ENCODE measurements at regions of chr3 and their contacts with region 1.

Region 1: DNA sequence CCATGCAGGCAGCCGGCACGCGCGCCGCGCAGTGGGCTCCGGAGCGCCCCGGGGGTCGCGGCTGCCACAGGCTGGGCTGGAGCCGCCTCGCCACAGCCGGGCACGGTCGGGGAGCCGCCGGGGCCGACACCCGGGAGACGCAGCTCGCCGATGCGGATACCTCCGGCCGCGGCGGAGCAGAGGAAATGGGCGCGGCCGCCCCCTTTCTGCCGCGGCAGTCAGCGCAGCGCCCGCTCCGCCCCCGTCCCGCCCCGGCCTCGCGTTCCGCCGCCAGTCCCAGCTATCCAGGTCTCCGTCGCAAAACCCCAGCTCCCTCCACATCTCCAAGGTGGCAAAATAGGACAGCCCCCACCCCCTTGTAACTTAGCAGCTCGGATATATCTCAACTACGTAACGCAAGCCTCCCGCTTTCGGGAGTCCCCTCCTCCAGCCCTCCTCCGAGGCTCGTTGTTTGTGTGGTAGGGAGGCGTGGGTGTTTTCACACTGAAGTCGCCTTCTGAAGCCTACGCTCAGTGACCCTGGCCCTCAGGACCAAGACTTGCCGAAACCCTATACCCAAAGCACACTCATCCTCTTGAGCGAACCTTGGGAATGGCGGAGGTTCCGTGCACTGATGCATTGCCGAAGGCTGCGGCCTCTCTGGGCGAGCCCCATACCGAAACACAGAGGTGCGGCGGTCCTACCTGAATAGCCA is at the start of gene SH3BP5:
- DNase-seq: peak; percentile 68 to 81
- ATAC-seq: peak; percentile 95 to 97
- H3K4me3 ChIP-seq: peak within 1 kb of the TSS; percentile 75
- H3K27ac ChIP-seq: peak within 1 kb of the TSS; percentile 68 to 87
- H3K4me1 ChIP-seq: peaks cover 11% of the 10 kb centered on the region; the same call in 2 of the 3 replicates
- CTCF ChIP-seq: peak; percentile 44
- EP300 ChIP-seq: no peak
- POLR2A ChIP-seq: peak; percentile 61
- RAD21 ChIP-seq: peak; percentile 19 to 60; a peak in 4 of 5 replicates
- polyA plus RNA-seq, gene SH3BP5: 12.6 and 16.0 TPM in 2 replicates

Region 2: DNA sequence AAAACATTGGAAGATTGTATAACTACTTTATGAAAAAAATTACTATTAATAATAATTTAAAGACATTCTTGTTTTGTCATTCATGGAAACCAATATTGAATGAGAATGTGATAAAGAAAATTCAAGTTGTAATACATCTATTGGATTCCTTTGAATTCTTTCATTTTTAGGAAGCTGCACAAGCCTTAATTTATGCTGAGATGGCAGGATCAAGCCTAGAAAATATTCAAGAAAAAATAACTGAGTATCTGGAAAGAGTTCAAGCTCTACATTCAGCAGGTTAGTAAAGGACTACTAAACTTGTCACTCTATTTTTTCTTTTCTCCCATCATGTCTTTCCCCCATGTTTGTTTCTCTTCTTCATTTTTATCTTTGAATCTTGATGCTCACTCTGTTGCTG is 120.6 kb before region 1 on chr3:
- CTCF ChIA-PET with region 1: no interaction called
- POLR2A ChIA-PET with region 1: no interaction called
- DNase-seq: no peak
- ATAC-seq: no peak
- H3K4me3 ChIP-seq: no peak overlapping the region
- H3K27ac ChIP-seq: no peak overlapping the region
- H3K4me1 ChIP-seq: peaks cover 11% of the 10 kb centered on the region
- CTCF ChIP-seq: no peak
- EP300 ChIP-seq: no peak
- POLR2A ChIP-seq: no peak
- RAD21 ChIP-seq: no peak

Region 3: DNA sequence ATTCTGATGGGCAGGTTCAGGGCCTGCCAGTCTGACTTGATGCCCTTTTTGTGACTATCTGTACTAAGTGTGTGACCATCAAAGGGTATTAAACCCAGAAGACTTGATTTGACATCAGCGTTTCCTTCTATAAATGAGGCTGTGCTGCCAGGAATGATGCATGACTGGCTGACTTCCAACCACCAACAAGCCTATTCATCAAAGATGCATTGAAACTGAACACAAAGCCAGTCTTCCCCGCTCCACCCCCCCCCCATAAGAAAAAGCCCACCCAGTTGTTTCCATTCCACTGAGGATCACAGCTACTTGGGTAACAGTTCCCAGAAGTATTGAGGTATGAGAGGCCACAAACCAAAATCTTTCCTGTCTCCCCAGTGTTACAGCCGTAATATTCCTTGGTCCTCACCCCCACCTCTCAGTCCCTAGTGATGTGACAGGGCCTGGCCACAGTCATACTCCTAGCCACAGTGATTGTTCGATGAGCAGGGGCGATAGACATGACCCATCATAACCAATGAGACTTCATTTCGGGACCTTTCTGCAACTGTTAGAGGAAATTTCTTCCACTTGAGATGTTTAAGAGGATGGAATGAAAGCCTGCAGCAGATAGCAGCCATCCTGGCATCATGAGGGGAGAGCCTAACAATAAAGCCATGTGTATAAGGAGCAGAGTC is 22.8 kb before region 1 on chr3:
- CTCF ChIA-PET with region 1: interaction called, 14 read pairs
- POLR2A ChIA-PET with region 1: no interaction called
- DNase-seq: no peak
- ATAC-seq: no peak
- H3K4me3 ChIP-seq: no peak overlapping the region
- H3K27ac ChIP-seq: peak overlapping the region; percentile 10 to 41; a peak in 3 of 6 replicates
- H3K4me1 ChIP-seq: peaks cover 30% of the 10 kb centered on the region
- CTCF ChIP-seq: no peak
- EP300 ChIP-seq: no peak
- POLR2A ChIP-seq: no peak
- RAD21 ChIP-seq: no peak

Region 4: DNA sequence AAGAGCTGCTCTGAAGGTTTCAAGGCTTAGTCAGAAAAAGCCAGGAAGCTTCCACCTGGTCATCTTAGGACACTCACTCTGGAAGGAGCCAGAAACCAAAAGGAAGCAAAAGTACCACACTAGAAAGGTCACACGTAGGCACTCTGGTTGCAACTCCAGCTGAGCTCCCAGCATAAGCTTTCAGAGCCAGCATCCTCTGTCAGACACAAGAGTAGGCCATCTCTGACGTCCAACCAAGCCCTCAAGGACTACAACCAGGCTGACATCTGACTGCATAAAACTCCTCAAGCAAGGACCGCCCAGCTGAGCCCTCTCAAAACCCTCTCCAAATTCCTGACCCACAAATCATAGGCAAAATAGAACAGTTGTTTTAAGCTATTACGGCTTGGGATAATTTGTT is 13.0 kb before region 1 on chr3:
- CTCF ChIA-PET with region 1: interaction called, 25 read pairs
- POLR2A ChIA-PET with region 1: no interaction called
- DNase-seq: no peak
- ATAC-seq: no peak; a peak in 1 of 6 replicates
- H3K4me3 ChIP-seq: no peak overlapping the region
- H3K27ac ChIP-seq: peak overlapping the region in 1 of 2 experiments; percentile 8; a peak in 1 of 6 replicates
- H3K4me1 ChIP-seq: peaks cover 22% of the 10 kb centered on the region
- CTCF ChIP-seq: no peak
- EP300 ChIP-seq: no peak
- POLR2A ChIP-seq: no peak
- RAD21 ChIP-seq: no peak

Region 5: GRCh38 chr3:15345608-15346137 is 13.1 kb after region 1 on chr3:
- CTCF ChIA-PET with region 1: interaction called, 13 read pairs
- POLR2A ChIA-PET with region 1: no interaction called
- DNase-seq: no peak
- ATAC-seq: no peak
- H3K4me3 ChIP-seq: no peak overlapping the region
- H3K27ac ChIP-seq: no peak overlapping the region
- H3K4me1 ChIP-seq: no peaks in the 10 kb centered on the region
- CTCF ChIP-seq: no peak
- EP300 ChIP-seq: no peak
- POLR2A ChIP-seq: no peak
- RAD21 ChIP-seq: no peak

Region 6: GRCh38 chr3:15420871-15421270 is 88.3 kb after region 1 on chr3:
- CTCF ChIA-PET with region 1: no interaction called
- POLR2A ChIA-PET with region 1: no interaction called
- DNase-seq: no peak
- ATAC-seq: no peak
- H3K4me3 ChIP-seq: no peak overlapping the region
- H3K27ac ChIP-seq: no peak overlapping the region
- H3K4me1 ChIP-seq: no peaks in the 10 kb centered on the region; the same call in 2 of the 3 replicates
- CTCF ChIP-seq: no peak
- EP300 ChIP-seq: no peak
- POLR2A ChIP-seq: no peak
- RAD21 ChIP-seq: no peak

Region 7: GRCh38 chr3:15500107-15500724 is 167.7 kb after region 1 on chr3:
- CTCF ChIA-PET with region 1: no interaction called
- POLR2A ChIA-PET with region 1: no interaction called
- DNase-seq: no peak
- ATAC-seq: no peak
- H3K4me3 ChIP-seq: no peak overlapping the region
- H3K27ac ChIP-seq: no peak overlapping the region
- H3K4me1 ChIP-seq: no peaks in the 10 kb centered on the region
- CTCF ChIP-seq: no peak
- EP300 ChIP-seq: no peak
- POLR2A ChIP-seq: no peak
- RAD21 ChIP-seq: no peak

Measured in A549 (cell line).